ENCODE measurements at regions of chr10 and their contacts with region 1.

Region 1: DNA sequence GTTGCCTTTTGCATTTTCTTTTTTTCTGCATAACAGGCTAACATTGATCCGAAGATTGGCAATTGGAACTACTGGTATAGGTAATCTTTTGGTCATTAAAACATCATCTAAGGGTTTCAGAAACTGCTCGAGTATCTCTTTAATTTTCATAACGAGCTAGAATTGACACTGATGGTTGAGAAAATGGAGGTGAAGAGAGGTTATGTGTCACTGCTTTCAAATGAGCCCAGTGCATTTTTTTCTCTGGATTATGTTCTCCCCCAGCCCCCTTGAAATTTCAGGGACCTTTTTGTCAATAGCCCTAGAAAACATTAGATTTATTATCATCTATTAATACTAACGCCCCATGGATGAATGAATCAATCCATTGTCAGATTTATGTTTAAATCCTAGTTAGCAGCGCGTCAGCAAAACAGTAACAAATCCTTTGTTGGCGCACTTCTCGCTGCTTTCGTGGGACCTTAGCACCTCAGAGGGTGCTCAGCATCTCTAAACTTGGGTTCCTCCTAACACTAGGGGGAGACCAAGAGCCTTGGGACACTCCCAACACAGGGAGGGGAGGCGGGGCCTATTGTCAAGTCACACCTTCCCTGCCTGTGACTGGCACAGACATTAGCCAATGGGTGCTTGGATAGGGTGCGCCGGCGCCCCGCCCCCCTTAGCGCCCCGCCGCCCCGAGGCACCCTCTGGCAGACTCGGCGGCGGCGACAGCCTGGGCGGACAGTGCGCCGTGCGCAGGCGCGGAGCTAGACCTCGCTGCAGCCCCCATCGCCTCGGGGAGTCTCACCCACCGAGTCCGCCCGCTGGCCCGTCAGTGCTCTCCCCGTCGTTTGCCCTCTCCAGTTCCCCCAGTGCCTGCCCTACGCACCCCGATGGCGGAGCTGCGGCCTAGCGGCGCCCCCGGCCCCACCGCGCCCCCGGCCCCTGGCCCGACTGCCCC is at the start of gene SUFU:
- DNase-seq: peak; percentile 99
- H3K4me3 Mint-ChIP-seq: no peak within 1 kb of the TSS
- H3K27ac Mint-ChIP-seq: peak within 1 kb of the TSS; percentile 82
- H3K4me1 Mint-ChIP-seq: peaks cover 28% of the 10 kb centered on the region
- H3K27me3 Mint-ChIP-seq: no peaks in the 10 kb centered on the region
- total RNA-seq, gene SUFU: 8.4 and 9.9 TPM in 2 replicates

Region 2: DNA sequence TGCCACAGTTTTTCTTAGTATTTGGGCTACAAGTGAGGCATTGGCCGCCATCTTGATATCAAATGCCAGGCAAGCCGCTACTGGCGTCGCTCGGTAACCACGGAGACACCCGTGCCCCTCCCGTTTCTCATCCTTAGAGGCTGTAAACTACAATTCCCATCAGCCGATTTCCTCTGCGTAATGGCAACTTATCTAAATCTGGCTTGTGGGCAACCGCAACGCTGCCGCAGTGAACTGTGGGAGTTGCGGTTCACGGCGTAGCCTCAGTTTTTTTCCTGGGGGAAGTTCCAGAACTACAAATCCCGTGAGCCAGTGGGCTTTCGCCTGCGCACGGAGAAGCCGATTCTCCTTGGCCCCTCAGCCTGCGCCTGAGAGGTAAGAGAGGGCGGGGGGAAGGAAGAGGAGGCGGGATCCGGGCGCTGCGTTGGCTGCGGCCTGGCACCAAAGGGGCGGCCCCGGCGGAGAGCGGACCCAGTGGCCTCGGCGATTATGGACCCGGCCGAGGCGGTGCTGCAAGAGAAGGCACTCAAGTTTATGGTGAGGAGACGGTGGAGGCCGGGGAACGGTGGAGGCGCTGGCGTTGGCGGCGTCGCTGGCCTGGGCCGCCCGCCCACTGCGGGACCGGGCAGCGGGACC is 1149.7 kb before region 1 on chr10 and contains the start of gene BTRC:
- intact Hi-C with region 1: loop called (anchors 10 kb)
- DNase-seq: peak; percentile 99
- H3K4me3 Mint-ChIP-seq: peak within 1 kb of the TSS; percentile 90
- H3K27ac Mint-ChIP-seq: peak within 1 kb of the TSS; percentile 98
- H3K4me1 Mint-ChIP-seq: peaks cover 24% of the 10 kb centered on the region
- H3K27me3 Mint-ChIP-seq: peaks cover 19% of the 10 kb centered on the region
- total RNA-seq, gene BTRC: 16.2 and 19.0 TPM in 2 replicates

Region 3: DNA sequence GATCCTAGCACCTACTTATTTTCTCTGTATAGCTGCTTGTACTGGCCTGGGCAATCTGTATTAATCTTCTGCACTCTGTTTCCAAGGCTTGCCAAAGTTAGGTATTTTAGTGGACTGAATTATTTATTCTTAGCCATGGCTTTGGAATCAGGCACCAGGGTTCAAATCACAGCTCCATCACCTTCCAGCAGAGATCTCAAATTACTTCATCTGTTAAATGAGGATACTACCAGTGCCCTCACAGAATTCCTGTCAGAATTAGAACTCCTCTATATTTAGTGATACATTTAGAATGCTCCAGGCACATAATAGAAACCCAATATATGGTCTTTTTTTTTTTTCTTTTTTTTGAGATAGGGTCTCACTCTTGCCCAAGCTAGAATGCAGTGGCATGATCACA is 465.1 kb before region 1 on chr10:
- intact Hi-C with region 1: no loop called
- DNase-seq: no peak
- H3K4me3 Mint-ChIP-seq: no peak overlapping the region
- H3K27ac Mint-ChIP-seq: no peak overlapping the region
- H3K4me1 Mint-ChIP-seq: peaks cover 6% of the 10 kb centered on the region
- H3K27me3 Mint-ChIP-seq: no peaks in the 10 kb centered on the region

Region 4: DNA sequence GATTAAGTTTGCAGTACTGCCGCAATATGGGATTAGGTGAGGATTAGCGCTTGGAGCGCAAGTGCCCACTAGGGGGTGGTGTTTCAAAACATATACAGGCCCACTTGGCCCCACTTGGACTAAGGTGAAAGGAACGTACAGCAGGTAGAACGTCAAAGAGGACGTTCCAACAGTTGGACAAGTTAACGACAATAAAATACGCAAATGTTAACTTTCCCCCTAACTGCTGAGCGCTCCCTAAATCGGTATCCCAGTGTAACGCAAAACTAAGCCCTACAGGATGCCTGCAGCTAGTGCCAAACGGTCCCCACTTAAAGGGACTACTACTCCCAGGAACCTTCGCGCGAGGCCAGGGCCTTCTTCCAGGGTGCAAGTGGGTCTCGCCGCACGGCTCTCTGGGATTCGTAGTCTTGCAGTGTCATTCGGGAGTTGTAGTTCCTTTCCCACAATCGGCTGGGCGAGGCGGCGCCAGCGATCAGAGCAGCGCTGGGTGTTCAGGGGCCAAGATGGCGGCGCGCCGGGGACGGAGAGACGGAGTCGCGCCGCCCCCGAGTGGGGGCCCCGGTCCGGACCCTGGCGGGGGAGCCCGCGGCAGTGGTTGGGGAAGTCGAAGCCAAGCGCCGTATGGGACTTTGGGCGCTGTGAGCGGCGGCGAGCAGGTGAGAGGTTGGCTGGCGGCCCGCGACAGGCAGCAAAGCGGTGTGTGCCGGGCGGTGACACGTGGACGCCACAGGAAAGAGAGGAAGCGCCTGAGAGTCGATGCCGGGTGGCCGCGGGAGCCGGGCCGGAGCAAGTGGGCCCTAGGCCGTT is 370.8 kb before region 1 on chr10 and contains the start of gene PPRC1:
- intact Hi-C with region 1: loop called (anchors 1 kb)
- DNase-seq: peak; percentile 99
- H3K4me3 Mint-ChIP-seq: peak within 1 kb of the TSS; percentile 97
- H3K27ac Mint-ChIP-seq: peak within 1 kb of the TSS; percentile 100
- H3K4me1 Mint-ChIP-seq: peaks cover 33% of the 10 kb centered on the region
- H3K27me3 Mint-ChIP-seq: no peaks in the 10 kb centered on the region
- total RNA-seq, gene PPRC1: 111 and 113 TPM in 2 replicates

Region 5: DNA sequence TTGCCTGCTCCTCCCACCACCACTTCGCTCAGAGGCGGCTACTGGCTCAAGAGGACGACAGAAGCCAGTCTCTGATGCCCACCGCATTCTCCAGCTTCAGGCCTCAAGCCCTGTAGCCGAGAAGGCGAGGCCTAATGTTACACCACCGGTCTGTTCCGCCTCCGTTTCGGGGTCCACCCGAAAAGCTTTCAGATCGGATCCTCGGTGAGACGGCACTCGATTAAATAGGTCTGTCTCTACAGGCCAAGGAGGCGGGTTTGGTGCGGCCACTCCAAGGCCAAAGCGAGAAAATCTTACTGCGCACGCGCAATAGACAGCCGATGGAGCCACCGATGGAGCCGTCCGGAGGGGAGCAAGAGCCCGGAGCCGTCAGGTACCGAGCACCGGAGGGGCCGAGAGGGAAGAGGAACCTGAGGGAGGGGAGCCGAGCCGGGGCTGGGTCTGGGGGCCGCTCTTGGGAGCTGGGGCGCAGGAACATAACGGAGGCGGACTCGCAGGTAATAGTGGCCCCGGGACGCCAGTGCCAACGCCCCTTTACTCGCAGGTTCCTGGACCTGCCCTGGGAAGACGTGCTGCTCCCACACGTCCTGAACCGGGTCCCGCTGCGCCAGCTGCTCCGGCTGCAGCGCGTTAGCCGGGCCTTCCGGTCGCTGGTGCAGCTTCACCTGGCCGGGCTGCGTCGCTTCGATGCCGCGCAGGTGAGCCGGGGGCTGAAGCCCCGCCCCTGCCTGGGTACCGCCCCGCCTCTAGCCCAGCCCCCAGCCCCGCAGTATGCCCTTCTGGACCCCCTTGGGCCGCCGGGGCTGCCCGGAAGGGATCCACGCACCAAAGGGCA is 82.5 kb before region 1 on chr10 and contains the start of gene FBXL15:
- intact Hi-C with region 1: loop called (anchors 1 kb)
- DNase-seq: peak; percentile 99
- H3K4me3 Mint-ChIP-seq: peak within 1 kb of the TSS; percentile 96
- H3K27ac Mint-ChIP-seq: peak within 1 kb of the TSS; percentile 95
- H3K4me1 Mint-ChIP-seq: peaks cover 26% of the 10 kb centered on the region
- H3K27me3 Mint-ChIP-seq: peaks cover 20% of the 10 kb centered on the region
- total RNA-seq, gene FBXL15: 14.0 and 16.4 TPM in 2 replicates

Region 6: GRCh38 chr10:102583435-102584417 is 80.2 kb after region 1 on chr10:
- intact Hi-C with region 1: loop called (anchors 1 kb)
- DNase-seq: peak; percentile 95
- H3K4me3 Mint-ChIP-seq: no peak overlapping the region
- H3K27ac Mint-ChIP-seq: no peak overlapping the region
- H3K4me1 Mint-ChIP-seq: peaks cover 7% of the 10 kb centered on the region
- H3K27me3 Mint-ChIP-seq: no peaks in the 10 kb centered on the region

Region 7: GRCh38 chr10:102743588-102744373 is 240.2 kb after region 1 on chr10 and contains the start of gene WBP1L:
- intact Hi-C with region 1: loop called (anchors 1 kb)
- DNase-seq: peak; percentile 98
- H3K4me3 Mint-ChIP-seq: peak within 1 kb of the TSS; percentile 83
- H3K27ac Mint-ChIP-seq: peak within 1 kb of the TSS; percentile 81
- H3K4me1 Mint-ChIP-seq: peaks cover 38% of the 10 kb centered on the region
- H3K27me3 Mint-ChIP-seq: no peaks in the 10 kb centered on the region
- total RNA-seq, gene WBP1L: 15.6 and 15.8 TPM in 2 replicates